ENCODE measurements at regions of chr3 and their contacts with region 1.

Region 1: GRCh38 chr3:17233398-17233800 is 348.6 kb downstream of the PLCL2 start:
- DNase-seq: no peak
- ATAC-seq: peak; percentile 98
- H3K4me3 Mint-ChIP-seq: no peak overlapping the region
- H3K27ac Mint-ChIP-seq: no peak overlapping the region
- H3K4me1 Mint-ChIP-seq: peaks cover 19% of the 10 kb centered on the region
- H3K27me3 Mint-ChIP-seq: no peaks in the 10 kb centered on the region
- CTCF ChIP-seq: no peak

Region 2: DNA sequence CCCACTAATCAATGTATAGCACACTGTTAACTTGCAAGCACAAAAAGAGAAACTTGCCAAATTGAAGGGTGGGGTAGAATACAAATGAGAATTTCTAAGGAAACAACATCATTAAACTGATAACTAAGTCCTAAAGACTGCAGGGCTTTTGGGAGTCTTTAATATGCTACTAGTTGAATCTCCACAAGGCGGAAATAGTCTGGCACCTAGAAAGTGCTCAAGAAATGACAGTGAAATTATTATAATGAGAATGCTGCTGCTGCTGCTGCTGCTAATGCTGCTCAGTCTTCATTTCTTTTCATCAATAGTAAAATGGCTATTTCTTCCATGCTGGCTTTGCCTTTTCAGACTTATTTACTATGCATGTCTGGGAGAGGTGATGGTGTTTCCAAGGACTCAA is 1540.0 kb before region 1 on chr3:
- CTCF ChIA-PET with region 1: no interaction called
- POLR2A ChIA-PET with region 1: no interaction called
- intact Hi-C with region 1: no loop called
- DNase-seq: no peak
- ATAC-seq: no peak
- H3K4me3 Mint-ChIP-seq: no peak overlapping the region
- H3K27ac Mint-ChIP-seq: no peak overlapping the region
- H3K4me1 Mint-ChIP-seq: peaks cover 6% of the 10 kb centered on the region
- H3K27me3 Mint-ChIP-seq: no peaks in the 10 kb centered on the region
- CTCF ChIP-seq: no peak

Region 3: GRCh38 chr3:16290007-16290826 is 943.2 kb before region 1 on chr3:
- CTCF ChIA-PET with region 1: interaction called, 6 read pairs
- POLR2A ChIA-PET with region 1: no interaction called
- intact Hi-C with region 1: loop called (anchors 2 kb)
- DNase-seq: no peak
- ATAC-seq: peak; percentile 49
- H3K4me3 Mint-ChIP-seq: no peak overlapping the region
- H3K27ac Mint-ChIP-seq: no peak overlapping the region
- H3K4me1 Mint-ChIP-seq: peaks cover 36% of the 10 kb centered on the region
- H3K27me3 Mint-ChIP-seq: no peaks in the 10 kb centered on the region
- CTCF ChIP-seq: peak; percentile 51

Region 4: DNA sequence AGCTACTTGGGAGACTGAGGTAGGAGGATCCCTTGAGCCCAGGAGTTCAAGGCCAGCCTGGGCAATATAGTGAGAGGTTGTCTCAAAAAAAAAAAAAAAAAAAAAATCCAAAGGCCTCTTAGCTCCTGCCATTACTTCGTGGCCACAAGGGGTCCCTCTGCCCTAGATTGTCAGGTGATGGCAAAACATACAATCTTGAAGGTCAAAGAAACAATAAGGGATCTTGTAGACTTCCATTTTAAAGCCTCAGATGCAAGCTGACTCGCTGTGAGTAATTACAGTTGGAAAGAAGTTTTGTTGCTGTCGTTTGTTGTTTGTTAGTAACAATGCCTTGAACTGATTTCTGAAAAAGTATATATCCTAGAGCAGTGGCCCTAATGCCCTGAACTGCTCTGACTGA is 404.6 kb before region 1 on chr3:
- CTCF ChIA-PET with region 1: interaction called, 16 read pairs
- POLR2A ChIA-PET with region 1: no interaction called
- intact Hi-C with region 1: loop called (anchors 1 kb)
- DNase-seq: no peak
- ATAC-seq: peak; percentile 60
- H3K4me3 Mint-ChIP-seq: no peak overlapping the region
- H3K27ac Mint-ChIP-seq: no peak overlapping the region
- H3K4me1 Mint-ChIP-seq: peaks cover 11% of the 10 kb centered on the region
- H3K27me3 Mint-ChIP-seq: no peaks in the 10 kb centered on the region
- CTCF ChIP-seq: no peak

Region 5: GRCh38 chr3:17032407-17033034 is 200.9 kb before region 1 on chr3:
- CTCF ChIA-PET with region 1: no interaction called
- POLR2A ChIA-PET with region 1: no interaction called
- intact Hi-C with region 1: loop called (anchors 5 kb)
- DNase-seq: no peak
- ATAC-seq: peak; percentile 31
- H3K4me3 Mint-ChIP-seq: no peak overlapping the region
- H3K27ac Mint-ChIP-seq: no peak overlapping the region
- H3K4me1 Mint-ChIP-seq: peaks cover 40% of the 10 kb centered on the region
- H3K27me3 Mint-ChIP-seq: no peaks in the 10 kb centered on the region
- CTCF ChIP-seq: no peak

Region 6: GRCh38 chr3:17175187-17175804 is 58.1 kb before region 1 on chr3:
- CTCF ChIA-PET with region 1: no interaction called
- POLR2A ChIA-PET with region 1: no interaction called
- intact Hi-C with region 1: no loop called
- DNase-seq: no peak
- ATAC-seq: no peak
- H3K4me3 Mint-ChIP-seq: no peak overlapping the region
- H3K27ac Mint-ChIP-seq: no peak overlapping the region
- H3K4me1 Mint-ChIP-seq: peaks cover 7% of the 10 kb centered on the region
- H3K27me3 Mint-ChIP-seq: no peaks in the 10 kb centered on the region
- CTCF ChIP-seq: no peak

Region 7: GRCh38 chr3:17195856-17196604 is 37.4 kb before region 1 on chr3:
- CTCF ChIA-PET with region 1: interaction called, 7 read pairs
- POLR2A ChIA-PET with region 1: no interaction called
- intact Hi-C with region 1: loop called (anchors 1 kb)
- DNase-seq: peak; percentile 22
- ATAC-seq: peak; percentile 86
- H3K4me3 Mint-ChIP-seq: peak overlapping the region; percentile 56
- H3K27ac Mint-ChIP-seq: peak overlapping the region; percentile 91
- H3K4me1 Mint-ChIP-seq: peaks cover 44% of the 10 kb centered on the region
- H3K27me3 Mint-ChIP-seq: no peaks in the 10 kb centered on the region
- CTCF ChIP-seq: no peak

Measured in activated B cell treated with CpG ODN at 0.5 μM for 24 hours (primary cell).